ENCODE measurements at regions of chr1 and their contacts with region 1.

Region 1: GRCh38 chr1:208652296-208653160 is 408.3 kb upstream of the PLXNA2 start:
- DNase-seq: peak in 1 of 2 donors; percentile 42
- ATAC-seq: peak; percentile 70 to 90 (median 84)
- H3K4me3 ChIP-seq: no peak overlapping the region
- H3K27ac ChIP-seq: no peak overlapping the region
- H3K4me1 ChIP-seq: peaks cover 0 to 7% (median 0%) of the 10 kb centered on the region in 9 donors
- H3K27me3 ChIP-seq: peaks cover 0 to 29% (median 4%) of the 10 kb centered on the region in 7 donors
- CTCF ChIP-seq: peak; percentile 70 to 91 (median 88)

Region 2: DNA sequence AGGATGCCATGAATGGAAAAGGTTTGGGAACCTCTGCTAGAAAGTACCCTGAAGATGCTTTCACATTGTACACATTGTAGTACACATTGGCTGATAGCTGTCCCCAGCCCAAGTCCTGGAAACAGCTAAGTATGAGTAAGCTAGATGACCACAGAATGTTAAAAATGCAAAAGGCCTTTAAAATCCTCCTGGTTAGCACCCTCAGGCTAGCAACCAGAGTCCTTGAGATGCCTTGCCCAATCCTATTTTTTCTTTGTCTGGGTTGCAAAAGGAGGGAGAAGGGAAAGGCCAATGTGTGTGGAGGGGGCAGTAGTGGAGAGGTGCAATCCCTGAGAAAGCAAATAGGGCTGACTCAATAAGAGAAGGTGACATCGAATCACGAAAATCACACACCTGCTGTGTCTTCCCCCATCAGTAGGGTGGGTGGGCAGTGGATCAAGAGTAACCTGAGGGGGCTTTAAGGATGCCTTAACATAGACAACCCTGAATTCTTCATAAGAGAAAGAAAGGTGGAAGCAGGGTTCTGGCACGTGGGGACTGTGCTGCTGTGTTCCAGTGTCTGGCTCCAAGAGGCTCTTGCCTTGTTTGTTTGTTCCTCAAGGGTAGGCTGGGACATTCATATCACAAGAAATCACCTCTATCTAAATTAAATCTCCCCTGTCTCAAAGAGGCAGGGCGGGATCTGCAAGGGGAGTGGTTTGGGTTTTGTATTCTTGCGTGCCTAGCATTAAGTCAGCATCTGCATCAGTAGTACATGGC is 142.2 kb before region 1 on chr1:
- intact Hi-C with region 1: no loop called
- DNase-seq: no peak
- ATAC-seq: no peak
- H3K4me3 ChIP-seq: no peak overlapping the region
- H3K27ac ChIP-seq: no peak overlapping the region
- H3K4me1 ChIP-seq: no peaks in the 10 kb centered on the region
- H3K27me3 ChIP-seq: no peaks in the 10 kb centered on the region
- CTCF ChIP-seq: no peak

Region 3: GRCh38 chr1:209190591-209191261 is 538.2 kb after region 1 on chr1:
- intact Hi-C with region 1: loop called in 6 of 10 experiments (anchors 2 to 10 kb)
- DNase-seq: peak; percentile 23 to 31
- ATAC-seq: peak in 4 of 8 donors; percentile 58 to 80 (median 68)
- H3K4me3 ChIP-seq: no peak overlapping the region
- H3K27ac ChIP-seq: no peak overlapping the region
- H3K4me1 ChIP-seq: peaks cover 0 to 5% (median 0%) of the 10 kb centered on the region in 9 donors
- H3K27me3 ChIP-seq: peaks cover 0 to 5% (median 0%) of the 10 kb centered on the region in 7 donors
- CTCF ChIP-seq: peak in 8 of 9 donors; percentile 62 to 79 (median 66)

Region 4: GRCh38 chr1:209354111-209354839 is 701.7 kb after region 1 on chr1:
- intact Hi-C with region 1: no loop called
- DNase-seq: peak; percentile 25 to 81
- ATAC-seq: peak; percentile 81 to 94 (median 89)
- H3K4me3 ChIP-seq: no peak overlapping the region
- H3K27ac ChIP-seq: no peak overlapping the region
- H3K4me1 ChIP-seq: peaks cover 0 to 13% (median 0%) of the 10 kb centered on the region in 9 donors
- H3K27me3 ChIP-seq: no peaks in the 10 kb centered on the region
- CTCF ChIP-seq: peak; percentile 55 to 90 (median 84)

Region 5: DNA sequence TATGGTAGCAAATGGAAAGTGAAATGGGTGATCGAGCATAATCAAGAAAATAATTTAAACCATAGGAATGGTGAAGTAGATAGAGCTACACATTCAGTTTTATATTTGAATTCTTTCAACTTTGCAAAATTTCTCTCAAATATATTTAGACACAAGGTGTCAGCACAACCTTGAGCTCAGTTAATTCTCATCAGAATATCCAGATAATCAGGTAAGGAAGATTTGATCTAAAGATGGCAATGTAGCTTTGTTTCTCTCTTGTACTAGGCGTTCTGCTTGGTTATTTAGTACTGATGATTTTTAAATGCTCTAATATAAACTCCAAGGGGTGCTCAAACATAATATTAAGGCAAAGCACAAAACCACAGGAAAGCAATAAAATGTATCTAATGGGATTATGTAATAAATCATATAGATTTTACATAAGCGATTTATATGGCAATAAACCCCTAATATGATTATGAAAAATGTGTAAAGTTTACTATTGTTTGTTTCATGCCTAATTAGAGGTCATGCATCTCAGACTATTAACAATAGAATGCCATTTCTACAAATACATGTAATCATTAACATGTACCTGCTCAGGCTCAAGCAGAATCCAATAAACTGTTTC is 1547.7 kb after region 1 on chr1:
- intact Hi-C with region 1: no loop called
- DNase-seq: no peak
- ATAC-seq: no peak
- H3K4me3 ChIP-seq: no peak overlapping the region
- H3K27ac ChIP-seq: no peak overlapping the region
- H3K4me1 ChIP-seq: no peaks in the 10 kb centered on the region
- H3K27me3 ChIP-seq: peaks cover 0 to 8% (median 3%) of the 10 kb centered on the region in 7 donors
- CTCF ChIP-seq: peak in 6 of 9 donors; percentile 7 to 50 (median 32)